Transverse colon (tissue), 4 donors: ENCODE measurements at regions of chr6 and their contacts with region 1.

Region 1: GRCh38 chr6:68427630-68428029 is 207.5 kb upstream of the ADGRB3 start:
- DNase-seq: no peak
- H3K4me3 ChIP-seq: no peak overlapping the region
- H3K27ac ChIP-seq: no peak overlapping the region
- H3K4me1 ChIP-seq: no peaks in the 10 kb centered on the region
- H3K27me3 ChIP-seq: no peaks in the 10 kb centered on the region
- CTCF ChIP-seq: no peak
- EP300 ChIP-seq: no peak
- POLR2A ChIP-seq: no peak

Region 2: DNA sequence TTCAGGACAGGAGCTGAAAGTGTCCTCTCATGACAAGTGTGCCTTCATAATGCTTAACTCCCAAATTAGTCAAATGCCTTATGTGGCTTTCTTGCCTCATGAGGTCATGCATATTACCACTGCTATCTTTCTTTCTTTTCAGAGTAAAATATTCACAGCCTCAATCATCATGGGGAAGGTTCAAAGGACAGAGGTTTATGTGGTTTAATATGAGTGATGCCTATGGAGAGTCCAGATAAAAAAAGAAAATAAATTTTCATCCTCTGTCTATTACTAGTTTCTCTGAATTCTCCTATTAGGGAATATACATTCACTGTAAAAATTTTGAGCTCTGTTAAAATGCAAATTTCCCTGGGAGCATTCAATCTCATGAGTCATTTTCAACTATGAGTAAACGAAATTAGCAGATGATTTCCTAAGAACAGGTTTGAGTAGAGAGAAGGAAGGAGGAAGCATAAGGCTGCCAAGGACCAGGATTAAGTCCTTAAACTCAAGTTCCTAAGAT is 189.5 kb before region 1 on chr6:
- in situ Hi-C with region 1: no loop called
- intact Hi-C with region 1: no loop called
- DNase-seq: no peak
- H3K4me3 ChIP-seq: no peak overlapping the region
- H3K27ac ChIP-seq: no peak overlapping the region
- H3K4me1 ChIP-seq: no peaks in the 10 kb centered on the region
- H3K27me3 ChIP-seq: no peaks in the 10 kb centered on the region
- CTCF ChIP-seq: no peak
- EP300 ChIP-seq: no peak
- POLR2A ChIP-seq: no peak

Region 3: DNA sequence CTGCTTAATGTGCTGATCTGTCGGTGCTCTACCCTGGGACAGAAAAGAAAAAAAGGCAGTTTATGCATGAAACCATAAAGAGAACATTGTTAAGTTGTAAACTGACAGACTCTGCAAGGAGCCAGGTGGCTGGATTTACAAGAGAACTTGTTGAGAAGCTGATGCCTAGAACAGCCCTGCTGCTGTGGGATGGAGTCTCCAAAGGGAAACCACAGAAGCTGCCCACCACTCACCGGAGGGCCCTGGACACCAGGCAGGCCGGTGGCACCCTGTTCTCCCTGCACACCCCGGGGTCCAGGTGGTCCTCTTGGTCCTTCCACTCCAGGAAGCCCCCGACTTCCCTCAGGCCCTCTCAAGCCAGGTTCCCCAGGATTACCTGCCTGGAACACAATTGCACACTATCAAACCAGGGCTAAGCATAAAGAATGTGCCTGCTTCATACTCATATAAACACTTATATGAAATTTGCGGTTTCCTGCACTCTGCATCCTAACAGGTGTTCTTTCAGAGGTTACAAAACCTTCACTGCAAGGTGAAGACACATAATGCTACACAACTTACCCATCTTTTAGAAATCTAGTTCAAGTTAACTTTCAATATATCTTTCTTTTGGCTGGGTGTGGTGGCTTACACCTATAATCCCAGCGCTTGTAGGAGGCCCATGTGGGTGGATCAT is 1807.1 kb after region 1 on chr6:
- in situ Hi-C with region 1: no loop called
- intact Hi-C with region 1: loop called (anchors 5 kb)
- DNase-seq: peak; percentile 11
- H3K4me3 ChIP-seq: no peak overlapping the region
- H3K27ac ChIP-seq: peak overlapping the region in 1 of 4 donors; percentile 32
- H3K4me1 ChIP-seq: peaks cover 0 to 4% (median 0%) of the 10 kb centered on the region in 4 donors
- H3K27me3 ChIP-seq: no peaks in the 10 kb centered on the region
- CTCF ChIP-seq: no peak
- EP300 ChIP-seq: no peak
- POLR2A ChIP-seq: no peak